Calu3 (cell line): ENCODE measurements at regions of chr2 and their contacts with region 1.

Region 1: DNA sequence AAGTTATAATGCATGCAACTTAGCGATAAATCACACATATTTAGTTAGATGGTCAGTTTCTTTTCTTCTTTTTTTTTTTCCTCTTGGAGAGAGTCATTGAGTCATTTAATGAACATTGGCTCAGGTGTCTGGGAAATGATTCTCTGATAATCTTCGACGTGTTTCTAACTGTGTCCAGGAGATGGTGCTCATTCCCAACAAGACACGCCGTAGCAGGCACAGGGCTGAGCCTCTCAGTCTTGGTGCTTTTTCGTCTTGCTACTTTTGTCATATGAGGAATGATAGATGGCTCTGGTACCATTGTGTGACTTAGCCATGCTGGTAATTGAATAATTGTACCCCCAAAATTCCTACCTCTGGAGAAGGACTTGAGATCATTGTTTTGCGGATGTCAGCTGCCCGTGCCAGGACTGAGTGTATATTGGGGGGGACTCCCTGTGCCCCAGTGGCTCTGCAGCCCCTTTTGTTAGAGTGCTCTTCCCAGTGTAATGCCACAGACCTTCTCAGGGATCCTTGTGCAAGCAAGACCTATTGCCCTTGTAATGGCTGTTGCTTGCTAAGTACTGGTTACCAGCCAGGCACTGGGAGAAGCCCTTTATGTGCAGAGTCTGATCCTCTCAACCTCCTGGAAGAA is 107.6 kb upstream of the CYRIA start:
- DNase-seq: peak; percentile 48
- H3K4me3 Mint-ChIP-seq: no peak overlapping the region
- H3K27ac Mint-ChIP-seq: no peak overlapping the region
- H3K4me1 Mint-ChIP-seq: no peaks in the 10 kb centered on the region
- H3K27me3 Mint-ChIP-seq: peaks cover 71% of the 10 kb centered on the region
- CTCF ChIP-seq: peak; percentile 23

Region 2: GRCh38 chr2:16900405-16901025 is 127.3 kb after region 1 on chr2:
- CTCF ChIA-PET with region 1: no interaction called
- intact Hi-C with region 1: loop called (anchors 5 kb)
- DNase-seq: peak; percentile 4
- H3K4me3 Mint-ChIP-seq: no peak overlapping the region
- H3K27ac Mint-ChIP-seq: no peak overlapping the region
- H3K4me1 Mint-ChIP-seq: no peaks in the 10 kb centered on the region
- H3K27me3 Mint-ChIP-seq: no peaks in the 10 kb centered on the region
- CTCF ChIP-seq: peak; percentile 20

Region 3: GRCh38 chr2:17309741-17310339 is 536.6 kb after region 1 on chr2:
- CTCF ChIA-PET with region 1: interaction called, 7 read pairs
- intact Hi-C with region 1: loop called (anchors 1 kb)
- DNase-seq: peak; percentile 64
- H3K4me3 Mint-ChIP-seq: no peak overlapping the region
- H3K27ac Mint-ChIP-seq: no peak overlapping the region
- H3K4me1 Mint-ChIP-seq: no peaks in the 10 kb centered on the region
- H3K27me3 Mint-ChIP-seq: peaks cover 20% of the 10 kb centered on the region
- CTCF ChIP-seq: peak; percentile 48

Region 4: DNA sequence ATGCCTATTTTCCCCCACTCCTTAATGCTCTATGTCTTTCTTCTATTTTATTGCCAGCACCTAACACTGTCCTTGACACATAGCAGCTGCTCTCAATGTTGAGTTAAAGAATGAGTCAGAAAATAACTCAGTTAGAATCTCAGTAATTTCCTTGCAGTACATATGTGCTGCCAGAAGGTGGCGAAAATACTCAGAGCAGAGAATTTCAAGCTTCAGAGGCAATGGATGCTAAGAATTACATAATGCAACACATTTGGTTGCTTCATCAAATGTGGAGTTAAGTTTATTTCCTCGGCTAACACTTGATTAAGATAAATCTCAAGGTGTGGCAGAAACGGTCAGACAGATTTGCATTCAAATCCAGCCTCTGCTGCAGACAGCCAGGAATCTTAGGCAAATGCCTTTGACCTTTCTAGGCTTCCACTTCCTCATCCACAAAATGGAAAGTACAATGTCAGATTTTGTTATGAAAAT is 872.9 kb after region 1 on chr2:
- CTCF ChIA-PET with region 1: no interaction called
- intact Hi-C with region 1: loop called (anchors 10 kb)
- DNase-seq: peak; percentile 60
- H3K4me3 Mint-ChIP-seq: no peak overlapping the region
- H3K27ac Mint-ChIP-seq: no peak overlapping the region
- H3K4me1 Mint-ChIP-seq: peaks cover 10% of the 10 kb centered on the region
- H3K27me3 Mint-ChIP-seq: no peaks in the 10 kb centered on the region
- CTCF ChIP-seq: peak; percentile 65